Astrocyte of the cerebellum (primary cell): ENCODE measurements at regions of chr19 and their contacts with region 1.

Region 1: DNA sequence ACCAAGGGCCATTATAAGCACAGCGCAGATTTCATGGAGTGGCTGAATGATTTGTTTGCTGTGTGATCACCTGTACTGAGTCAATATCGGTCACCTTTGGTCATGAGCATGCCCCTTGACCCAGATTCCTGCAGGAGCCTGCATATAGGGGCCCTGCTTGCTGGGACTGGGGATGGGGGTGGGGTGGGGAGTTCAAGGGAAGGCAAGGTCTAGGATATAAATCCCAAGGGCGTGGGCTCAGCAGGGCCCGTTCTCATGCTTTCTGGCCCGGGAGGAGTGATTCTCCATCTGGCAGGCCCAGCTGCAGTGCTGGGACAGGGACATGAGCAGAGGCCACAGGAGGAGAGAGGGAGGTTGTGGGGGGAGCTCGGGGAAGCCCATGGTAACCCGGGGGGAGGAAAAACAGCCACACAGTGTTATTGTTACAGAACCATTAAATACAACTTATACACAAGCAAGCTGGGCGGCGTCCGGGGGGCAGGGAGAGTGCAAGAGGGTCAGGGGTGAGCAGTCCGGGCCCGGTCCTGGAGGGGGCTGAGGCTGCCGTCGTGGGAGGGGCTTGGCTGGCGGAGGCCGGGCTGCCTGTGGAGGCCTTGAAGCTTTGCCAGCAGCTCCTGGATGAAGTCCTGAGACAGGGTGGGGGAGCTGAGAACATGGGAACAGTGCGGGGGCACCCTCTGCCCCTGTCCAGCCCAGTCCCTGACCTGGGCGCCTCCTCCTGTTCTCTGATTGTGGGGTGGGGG is 5.2 kb downstream of the PPP1R14A start:
- DNase-seq: no peak
- H3K4me3 ChIP-seq: no peak overlapping the region
- CTCF ChIP-seq: no peak

Region 2: DNA sequence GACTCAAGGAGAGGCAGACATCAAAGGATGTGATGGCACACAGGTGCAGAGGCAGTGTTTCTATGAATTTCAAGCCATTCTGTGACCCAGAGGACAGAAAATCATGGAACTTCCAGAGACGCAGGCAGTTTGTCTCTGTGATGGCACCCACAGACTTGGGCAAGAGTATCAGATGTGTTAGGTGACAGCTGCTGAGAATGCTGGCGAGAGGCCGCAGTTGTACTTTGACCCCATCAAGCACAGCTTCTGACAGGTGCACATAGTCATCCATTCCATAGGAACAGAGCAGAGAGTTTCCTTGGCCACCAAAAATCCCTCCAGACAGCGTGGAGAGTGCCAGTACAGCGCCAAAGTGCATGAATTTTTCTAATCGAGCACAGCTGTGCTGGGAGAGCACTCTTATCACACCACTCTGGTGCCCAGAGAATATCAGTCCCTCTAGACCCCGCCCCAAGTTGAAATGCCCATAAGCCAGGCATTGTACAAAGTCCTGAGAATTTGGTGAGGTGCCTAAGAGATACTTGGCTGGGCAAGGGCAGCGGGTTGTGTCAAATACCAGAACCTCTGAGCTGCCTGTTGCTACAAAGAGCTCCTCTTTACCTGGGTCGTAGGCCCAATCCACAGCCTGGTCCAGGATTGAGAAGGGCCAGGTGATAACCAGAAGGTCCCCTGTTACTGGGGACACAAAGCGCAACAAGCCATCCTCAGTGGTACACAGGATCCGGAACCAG is 357.0 kb before region 1 on chr19:
- in situ Hi-C with region 1: loop called (anchors 10 kb)
- DNase-seq: no peak
- H3K4me3 ChIP-seq: no peak overlapping the region
- CTCF ChIP-seq: no peak

Region 3: GRCh38 chr19:38290631-38291157 is 39.7 kb after region 1 on chr19:
- in situ Hi-C with region 1: no loop called
- DNase-seq: peak; percentile 56
- H3K4me3 ChIP-seq: no peak overlapping the region
- CTCF ChIP-seq: no peak

Region 4: GRCh38 chr19:38315657-38316476 is 64.9 kb after region 1 on chr19 and contains the start of gene YIF1B:
- in situ Hi-C with region 1: loop called (anchors 5 kb)
- DNase-seq: peak; percentile 88
- H3K4me3 ChIP-seq: peak within 1 kb of the TSS; percentile 70
- CTCF ChIP-seq: no peak

Region 5: DNA sequence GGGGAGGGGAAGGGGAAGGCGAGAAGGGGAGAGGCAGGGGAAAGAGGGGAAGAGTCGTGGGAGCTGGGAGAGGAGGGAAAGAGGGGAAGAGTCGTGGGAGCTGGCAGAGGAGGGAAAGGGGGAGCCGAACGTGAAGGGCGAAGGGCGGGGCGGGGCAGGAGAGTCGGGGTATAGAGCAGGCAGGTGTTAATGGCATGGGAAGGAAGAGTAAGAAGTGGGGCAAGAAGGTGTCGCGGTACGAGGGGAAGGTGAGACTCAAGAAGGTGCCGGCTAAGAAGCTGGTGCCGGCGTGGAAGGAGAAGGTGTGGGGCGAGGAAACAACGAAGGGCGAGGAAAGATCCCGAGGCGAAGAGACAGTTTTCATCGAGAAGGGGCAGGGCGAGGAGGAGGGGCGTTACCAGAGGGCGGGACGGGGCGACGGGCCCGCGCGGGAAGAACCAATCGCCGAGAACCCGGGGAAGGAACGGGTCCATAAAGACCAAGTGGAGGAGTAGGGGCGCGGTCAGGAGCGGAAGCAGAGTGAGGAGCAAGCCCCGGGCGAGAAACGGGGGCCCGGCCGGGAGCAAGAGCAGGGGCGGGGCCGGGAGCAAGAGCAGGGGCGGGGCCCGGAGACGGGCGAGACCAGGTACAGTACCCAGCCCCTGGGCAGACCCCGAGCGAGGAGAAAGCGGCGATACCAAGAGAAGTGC is 85.1 kb after region 1 on chr19:
- in situ Hi-C with region 1: no loop called
- DNase-seq: peak; percentile 82
- H3K4me3 ChIP-seq: peak overlapping the region; percentile 74
- CTCF ChIP-seq: no peak